Activated CD8-positive, alpha-beta T cell treated with anti-CD3 and anti-CD28 coated beads for 36 hours (primary cell): ENCODE measurements at regions of chr10 and their contacts with region 1.

Region 1: DNA sequence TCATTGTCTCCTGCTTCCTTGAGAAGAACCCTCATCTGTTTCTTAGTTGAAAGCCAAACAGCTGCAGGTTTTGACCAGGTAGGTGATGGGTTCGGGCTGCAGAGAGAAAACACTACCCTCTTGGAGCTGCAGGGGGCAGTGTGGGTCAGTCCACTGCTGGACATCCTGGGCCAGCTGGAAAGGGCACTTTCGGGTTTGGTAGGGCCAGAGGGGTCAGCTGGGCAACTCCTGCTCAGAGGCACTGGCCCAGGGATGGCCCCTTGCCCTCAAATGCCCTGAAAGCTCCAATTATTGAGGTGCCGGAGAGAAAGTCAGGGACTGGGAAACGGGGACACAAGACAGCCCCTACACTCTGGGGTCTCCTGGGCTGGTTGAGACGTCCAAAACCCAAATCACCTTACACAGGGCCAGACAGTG is 90.7 kb downstream of the MKI67 start:
- DNase-seq: peak; percentile 80
- ATAC-seq: peak; percentile 94
- H3K4me3 Mint-ChIP-seq: no peak overlapping the region
- H3K27ac Mint-ChIP-seq: no peak overlapping the region
- H3K4me1 Mint-ChIP-seq: peaks cover 10% of the 10 kb centered on the region
- H3K27me3 Mint-ChIP-seq: no peaks in the 10 kb centered on the region
- CTCF ChIP-seq: peak; percentile 89

Region 2: GRCh38 chr10:127945335-127945734 is 90.2 kb before region 1 on chr10:
- CTCF ChIA-PET with region 1: no interaction called
- POLR2A ChIA-PET with region 1: no interaction called
- intact Hi-C with region 1: no loop called
- DNase-seq: peak; percentile 17
- ATAC-seq: peak; percentile 62
- H3K4me3 Mint-ChIP-seq: no peak overlapping the region
- H3K27ac Mint-ChIP-seq: no peak overlapping the region
- H3K4me1 Mint-ChIP-seq: peaks cover 13% of the 10 kb centered on the region
- H3K27me3 Mint-ChIP-seq: no peaks in the 10 kb centered on the region
- CTCF ChIP-seq: no peak

Region 3: DNA sequence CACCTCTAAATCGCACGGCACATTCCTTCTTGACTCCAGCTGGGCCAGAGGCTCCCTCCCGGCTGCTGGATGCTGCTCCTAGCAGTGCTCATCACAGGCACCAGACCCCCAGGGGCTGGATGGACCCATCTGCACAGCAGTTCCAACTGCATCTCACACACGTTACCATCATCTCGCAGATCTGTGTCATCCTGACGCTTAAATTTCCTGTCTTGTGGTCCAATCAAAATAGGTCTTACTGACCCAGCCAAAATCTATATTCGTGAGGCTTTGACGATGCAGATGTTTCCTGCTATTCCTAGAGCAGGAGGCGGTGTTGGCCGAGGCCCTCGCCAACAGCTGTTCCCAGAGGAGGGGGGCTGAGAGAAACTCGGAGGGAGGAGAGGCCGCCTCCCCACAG is 17.3 kb before region 1 on chr10:
- CTCF ChIA-PET with region 1: interaction called, 35 read pairs
- POLR2A ChIA-PET with region 1: no interaction called
- intact Hi-C with region 1: no loop called
- DNase-seq: no peak
- ATAC-seq: peak; percentile 64
- H3K4me3 Mint-ChIP-seq: peak overlapping the region; percentile 47
- H3K27ac Mint-ChIP-seq: no peak overlapping the region
- H3K4me1 Mint-ChIP-seq: peaks cover 6% of the 10 kb centered on the region
- H3K27me3 Mint-ChIP-seq: peaks cover 4% of the 10 kb centered on the region
- CTCF ChIP-seq: no peak

Region 4: GRCh38 chr10:128064108-128064969 is 28.8 kb after region 1 on chr10:
- CTCF ChIA-PET with region 1: interaction called, 179 read pairs
- POLR2A ChIA-PET with region 1: interaction called, 4 read pairs
- intact Hi-C with region 1: loop called (anchors 1 kb)
- DNase-seq: peak; percentile 92
- ATAC-seq: peak; percentile 82
- H3K4me3 Mint-ChIP-seq: peak overlapping the region; percentile 72
- H3K27ac Mint-ChIP-seq: peak overlapping the region; percentile 94
- H3K4me1 Mint-ChIP-seq: peaks cover 72% of the 10 kb centered on the region
- H3K27me3 Mint-ChIP-seq: no peaks in the 10 kb centered on the region
- CTCF ChIP-seq: no peak

Region 5: GRCh38 chr10:128078136-128078969 is 42.8 kb after region 1 on chr10:
- CTCF ChIA-PET with region 1: interaction called, 179 read pairs
- POLR2A ChIA-PET with region 1: no interaction called
- intact Hi-C with region 1: no loop called
- DNase-seq: peak; percentile 57
- ATAC-seq: peak; percentile 75
- H3K4me3 Mint-ChIP-seq: no peak overlapping the region
- H3K27ac Mint-ChIP-seq: no peak overlapping the region
- H3K4me1 Mint-ChIP-seq: no peaks in the 10 kb centered on the region
- H3K27me3 Mint-ChIP-seq: no peaks in the 10 kb centered on the region
- CTCF ChIP-seq: peak; percentile 78

Region 6: GRCh38 chr10:128102480-128103228 is 67.1 kb after region 1 on chr10:
- CTCF ChIA-PET with region 1: interaction called, 10 read pairs
- POLR2A ChIA-PET with region 1: no interaction called
- intact Hi-C with region 1: no loop called
- DNase-seq: no peak
- ATAC-seq: no peak
- H3K4me3 Mint-ChIP-seq: no peak overlapping the region
- H3K27ac Mint-ChIP-seq: peak overlapping the region; percentile 6
- H3K4me1 Mint-ChIP-seq: peaks cover 24% of the 10 kb centered on the region
- H3K27me3 Mint-ChIP-seq: no peaks in the 10 kb centered on the region
- CTCF ChIP-seq: no peak